ENCODE measurements at regions of chr2 and their contacts with region 1.

Region 1: DNA sequence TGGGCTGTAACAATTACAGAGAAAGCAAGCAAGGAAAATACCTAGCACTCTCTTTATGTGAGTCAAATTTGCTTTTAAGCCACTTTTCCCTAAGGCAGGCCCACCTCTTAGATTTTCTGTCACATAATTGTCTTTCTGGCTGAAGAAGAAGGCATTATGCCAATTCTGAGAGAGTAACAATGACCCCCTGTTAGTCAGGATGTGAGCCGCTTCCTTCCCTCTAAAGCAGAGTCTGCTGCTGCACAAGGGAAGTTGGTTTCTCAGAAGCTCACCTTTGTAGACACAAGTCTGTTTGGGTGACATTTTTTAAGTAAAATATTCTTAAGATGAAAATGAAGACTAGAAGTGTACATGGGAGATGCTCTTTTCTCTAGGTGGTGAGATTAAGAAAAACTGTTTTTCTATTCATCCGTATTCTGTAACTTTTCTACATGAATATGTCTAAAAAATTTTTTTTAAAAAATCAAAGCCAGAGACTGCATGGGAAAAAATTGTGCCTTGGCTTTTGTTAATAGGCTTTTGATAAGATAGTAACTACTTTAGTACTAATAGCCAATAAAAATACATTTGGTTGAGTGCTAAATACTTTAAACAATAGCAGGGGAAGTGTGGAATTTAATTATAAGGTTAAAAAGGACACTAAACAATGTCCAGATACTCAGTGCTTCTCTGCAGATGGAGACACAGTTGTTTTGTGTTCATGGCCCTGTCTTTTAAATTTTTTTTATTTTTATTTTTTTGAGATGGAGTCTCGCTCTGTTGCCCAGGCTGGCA is 33.4 kb upstream of the VPS54 start:
- DNase-seq: peak in 5 of 9 experiments; percentile 11 to 43 (median 24)
- ATAC-seq: peak; percentile 53
- H3K4me3 ChIP-seq: no peak overlapping the region
- H3K4me3 Mint-ChIP-seq: no peak overlapping the region
- H3K27ac ChIP-seq: no peak overlapping the region
- H3K27ac Mint-ChIP-seq: peak overlapping the region; percentile 34
- H3K4me1 ChIP-seq: peaks cover 20% of the 10 kb centered on the region
- H3K4me1 Mint-ChIP-seq: peaks cover 42% of the 10 kb centered on the region
- H3K27me3 ChIP-seq: no peaks in the 10 kb centered on the region
- H3K27me3 Mint-ChIP-seq: no peaks in the 10 kb centered on the region
- CTCF ChIP-seq: no peak

Region 2: GRCh38 chr2:63166917-63167316 is 885.7 kb before region 1 on chr2:
- CTCF ChIA-PET with region 1: no interaction called
- POLR2A ChIA-PET with region 1: no interaction called
- intact Hi-C with region 1: no loop called
- DNase-seq: no peak
- ATAC-seq: no peak
- H3K4me3 ChIP-seq: no peak overlapping the region
- H3K4me3 Mint-ChIP-seq: no peak overlapping the region
- H3K27ac ChIP-seq: no peak overlapping the region
- H3K27ac Mint-ChIP-seq: no peak overlapping the region
- H3K4me1 ChIP-seq: no peaks in the 10 kb centered on the region
- H3K4me1 Mint-ChIP-seq: no peaks in the 10 kb centered on the region
- H3K27me3 ChIP-seq: no peaks in the 10 kb centered on the region
- H3K27me3 Mint-ChIP-seq: no peaks in the 10 kb centered on the region
- CTCF ChIP-seq: no peak

Region 3: DNA sequence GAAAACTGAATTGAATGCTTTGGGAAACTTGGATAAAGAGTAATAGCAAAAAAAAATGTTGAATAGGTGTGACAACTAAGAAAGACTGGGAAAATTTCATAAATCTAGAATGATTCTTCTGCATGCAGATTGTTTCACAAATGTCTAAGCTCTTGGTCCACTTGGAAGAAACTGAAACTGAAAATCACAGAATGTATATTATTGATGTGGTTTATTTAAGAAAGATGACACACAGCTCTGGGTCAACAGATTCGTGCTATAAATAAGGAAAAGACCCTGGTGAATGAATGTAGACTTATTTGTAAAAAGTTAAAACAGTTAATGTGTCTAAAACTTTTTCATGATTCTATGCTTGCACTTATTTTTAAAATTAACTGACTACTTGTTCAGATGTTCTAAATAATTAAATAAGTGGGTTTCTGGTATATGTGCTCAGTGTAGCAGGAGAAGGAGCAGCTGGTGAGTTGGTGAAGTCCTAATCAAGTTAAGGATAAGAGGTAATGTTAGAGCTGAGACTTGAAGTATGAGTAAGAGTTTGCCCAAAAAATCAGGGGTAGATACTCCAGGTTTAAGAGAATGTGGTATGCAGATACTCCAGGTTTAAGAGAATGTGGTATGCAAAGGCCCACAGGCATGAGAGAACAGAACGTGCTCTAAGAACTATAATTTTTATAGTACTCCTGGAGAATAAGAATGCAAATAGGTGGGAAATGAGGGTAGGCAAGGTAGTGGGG is 186.5 kb before region 1 on chr2:
- CTCF ChIA-PET with region 1: no interaction called
- POLR2A ChIA-PET with region 1: no interaction called
- intact Hi-C with region 1: no loop called
- DNase-seq: peak in 1 of 9 experiments; percentile 48
- ATAC-seq: peak; percentile 44
- H3K4me3 ChIP-seq: no peak overlapping the region
- H3K4me3 Mint-ChIP-seq: no peak overlapping the region
- H3K27ac ChIP-seq: peak overlapping the region in 1 of 2 experiments; percentile 28
- H3K27ac Mint-ChIP-seq: peak overlapping the region; percentile 65
- H3K4me1 ChIP-seq: peaks cover 12% of the 10 kb centered on the region
- H3K4me1 Mint-ChIP-seq: peaks cover 29% of the 10 kb centered on the region
- H3K27me3 ChIP-seq: no peaks in the 10 kb centered on the region
- H3K27me3 Mint-ChIP-seq: no peaks in the 10 kb centered on the region
- CTCF ChIP-seq: no peak

Region 4: DNA sequence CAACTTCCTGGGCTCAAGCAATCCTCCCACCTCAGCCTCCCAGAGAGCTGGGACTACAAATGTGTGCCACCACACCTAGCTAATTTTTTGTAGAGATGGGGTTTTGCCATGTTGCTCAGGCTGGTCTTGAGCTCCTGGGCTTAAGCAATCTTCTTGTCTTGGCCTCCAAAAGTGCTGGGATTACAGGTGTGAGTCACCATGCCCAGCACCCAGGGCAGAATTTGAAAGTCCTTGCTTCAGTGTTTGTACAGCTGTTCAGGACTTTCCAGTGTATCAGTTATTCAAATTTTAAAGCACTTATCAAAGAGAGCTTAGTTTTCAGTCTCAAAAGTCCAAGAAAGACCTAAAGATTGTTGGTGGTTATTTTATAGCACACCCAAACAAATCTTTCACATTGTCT is 10.2 kb after region 1 on chr2:
- CTCF ChIA-PET with region 1: interaction called, 12 read pairs
- POLR2A ChIA-PET with region 1: no interaction called
- intact Hi-C with region 1: no loop called
- DNase-seq: no peak
- ATAC-seq: no peak
- H3K4me3 ChIP-seq: no peak overlapping the region
- H3K4me3 Mint-ChIP-seq: no peak overlapping the region
- H3K27ac ChIP-seq: no peak overlapping the region
- H3K27ac Mint-ChIP-seq: peak overlapping the region; percentile 29
- H3K4me1 ChIP-seq: peaks cover 15% of the 10 kb centered on the region
- H3K4me1 Mint-ChIP-seq: peaks cover 26% of the 10 kb centered on the region
- H3K27me3 ChIP-seq: no peaks in the 10 kb centered on the region
- H3K27me3 Mint-ChIP-seq: no peaks in the 10 kb centered on the region
- CTCF ChIP-seq: no peak

Region 5: DNA sequence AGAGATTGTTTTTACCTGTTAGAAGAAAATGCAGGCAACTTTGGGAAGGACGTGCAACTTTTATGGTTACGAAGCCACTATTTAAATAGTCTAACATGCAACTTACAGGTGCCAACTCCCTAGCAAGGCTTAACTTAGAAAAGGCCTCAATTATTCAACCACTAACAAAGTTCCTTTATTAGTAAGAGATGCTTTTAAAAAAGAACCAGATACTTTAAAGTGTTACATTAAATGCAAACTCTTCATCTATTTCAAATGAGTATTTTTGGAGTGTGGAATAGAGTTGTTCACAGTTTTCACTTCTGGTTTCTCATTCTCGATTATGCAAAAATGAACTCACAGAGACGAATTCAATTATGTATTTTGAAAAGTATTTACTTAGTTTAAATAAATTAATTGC is 39.8 kb after region 1 on chr2:
- CTCF ChIA-PET with region 1: no interaction called
- POLR2A ChIA-PET with region 1: no interaction called
- intact Hi-C with region 1: loop called in 1 of 2 experiments (anchors 1 kb)
- DNase-seq: no peak
- ATAC-seq: no peak
- H3K4me3 ChIP-seq: no peak overlapping the region
- H3K4me3 Mint-ChIP-seq: no peak overlapping the region
- H3K27ac ChIP-seq: no peak overlapping the region
- H3K27ac Mint-ChIP-seq: no peak overlapping the region
- H3K4me1 ChIP-seq: no peaks in the 10 kb centered on the region
- H3K4me1 Mint-ChIP-seq: peaks cover 6% of the 10 kb centered on the region
- H3K27me3 ChIP-seq: no peaks in the 10 kb centered on the region
- H3K27me3 Mint-ChIP-seq: no peaks in the 10 kb centered on the region
- CTCF ChIP-seq: no peak

Region 6: DNA sequence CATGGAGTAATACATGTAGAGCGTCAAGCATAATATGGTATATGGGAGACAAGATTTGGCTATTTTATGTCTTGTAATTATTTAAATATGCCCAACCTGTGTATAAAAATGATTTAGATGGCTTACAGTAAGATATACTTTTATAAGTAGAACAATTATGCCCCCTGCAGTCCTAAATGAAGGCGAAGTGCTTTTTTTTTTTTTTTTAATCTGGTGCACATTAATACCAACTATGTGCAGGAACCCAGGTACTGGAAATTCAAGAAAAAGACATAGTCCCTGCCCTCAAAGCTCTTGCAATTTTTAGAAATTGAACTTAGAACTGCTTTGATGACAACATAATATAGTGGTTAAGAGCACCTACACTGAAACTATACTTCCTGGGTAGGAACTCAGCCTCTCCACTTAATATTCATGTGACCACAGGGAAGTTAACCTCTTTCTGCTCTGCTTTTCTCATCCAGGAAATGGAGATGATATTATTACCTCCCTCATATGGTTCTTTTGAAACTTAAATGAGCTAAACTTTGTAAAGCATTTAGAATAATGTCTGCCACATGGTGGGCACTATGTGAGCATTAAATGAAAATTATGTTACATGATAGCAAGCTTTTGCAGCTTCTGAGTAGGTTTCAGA is 509.6 kb after region 1 on chr2:
- CTCF ChIA-PET with region 1: interaction called, 3 read pairs
- POLR2A ChIA-PET with region 1: no interaction called
- intact Hi-C with region 1: loop called (anchors 1 to 2 kb)
- DNase-seq: peak in 2 of 9 experiments; percentile 46 to 61
- ATAC-seq: peak; percentile 78
- H3K4me3 ChIP-seq: no peak overlapping the region
- H3K4me3 Mint-ChIP-seq: no peak overlapping the region
- H3K27ac ChIP-seq: no peak overlapping the region
- H3K27ac Mint-ChIP-seq: no peak overlapping the region
- H3K4me1 ChIP-seq: peaks cover 14% of the 10 kb centered on the region
- H3K4me1 Mint-ChIP-seq: peaks cover 30% of the 10 kb centered on the region
- H3K27me3 ChIP-seq: no peaks in the 10 kb centered on the region
- H3K27me3 Mint-ChIP-seq: no peaks in the 10 kb centered on the region
- CTCF ChIP-seq: peak; percentile 58